Cardiac septum (tissue), 1 donor: ENCODE measurements at regions of chr2 and their contacts with region 1.

Region 1: GRCh38 chr2:37414470-37414949 is 70.1 kb downstream of the QPCT start:
- DNase-seq: no peak

Region 2: DNA sequence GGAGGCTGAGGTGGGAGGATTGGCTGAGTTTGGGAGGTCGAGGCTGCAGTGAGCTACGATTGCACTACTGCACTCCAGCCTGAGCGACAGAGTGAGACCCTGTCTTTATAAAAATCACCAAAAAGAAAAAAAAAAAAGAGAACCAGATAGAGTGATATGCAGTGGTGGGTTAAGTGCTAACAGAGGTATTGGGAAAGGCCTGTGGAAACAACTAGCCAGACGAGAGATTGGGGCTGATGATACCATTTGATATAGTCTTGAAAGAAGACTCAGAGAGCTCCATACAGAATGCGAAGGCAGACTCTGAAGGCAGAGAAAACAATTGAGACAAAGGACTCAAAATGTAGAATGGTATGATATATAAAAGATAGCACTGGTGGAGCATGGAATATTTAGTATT is 122.8 kb after region 1 on chr2:
- intact Hi-C with region 1: loop called (anchors 5 kb)
- DNase-seq: no peak

Region 3: GRCh38 chr2:37635504-37636380 is 221.2 kb after region 1 on chr2:
- intact Hi-C with region 1: loop called (anchors 5 kb)
- DNase-seq: peak; percentile 78

Region 4: DNA sequence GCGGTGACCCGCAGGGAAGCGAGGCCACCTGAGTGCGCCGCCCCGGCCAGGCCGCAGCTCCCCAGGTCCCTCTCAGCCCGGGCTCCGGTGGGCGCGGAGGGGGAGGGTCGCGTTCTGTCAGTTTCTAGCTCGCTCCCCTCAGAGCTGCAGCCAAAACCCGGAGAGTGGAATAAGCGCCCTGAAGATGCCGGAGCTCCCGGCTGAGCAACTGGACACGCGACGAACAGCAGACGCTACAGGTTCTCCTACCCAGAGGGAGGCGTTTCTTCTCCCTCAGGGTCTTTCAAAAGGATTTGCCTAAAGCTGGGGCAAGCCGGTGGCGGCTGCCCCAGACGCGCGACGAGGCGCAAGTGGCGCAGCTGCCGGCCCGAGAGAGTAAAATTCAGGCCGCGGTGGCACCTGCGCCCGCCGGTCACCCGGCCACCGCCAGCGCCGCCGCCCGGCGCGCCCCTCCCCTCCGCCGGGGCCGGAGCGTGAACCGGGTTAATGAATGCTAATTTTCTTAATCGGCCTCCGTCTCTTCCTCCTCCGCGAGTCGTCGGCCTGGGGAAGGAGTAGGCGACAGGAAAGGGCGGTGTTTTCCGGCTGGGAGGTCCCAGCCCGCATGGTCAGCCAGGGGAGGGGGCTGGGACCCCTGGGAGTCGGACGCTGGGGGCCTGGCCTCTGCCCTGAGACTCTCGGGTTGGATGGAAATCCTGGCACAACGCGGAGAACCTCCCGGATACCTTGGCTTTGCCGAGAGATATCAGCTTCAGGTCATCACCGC is 257.8 kb after region 1 on chr2:
- intact Hi-C with region 1: loop called (anchors 1 kb)
- DNase-seq: peak; percentile 90

Region 5: DNA sequence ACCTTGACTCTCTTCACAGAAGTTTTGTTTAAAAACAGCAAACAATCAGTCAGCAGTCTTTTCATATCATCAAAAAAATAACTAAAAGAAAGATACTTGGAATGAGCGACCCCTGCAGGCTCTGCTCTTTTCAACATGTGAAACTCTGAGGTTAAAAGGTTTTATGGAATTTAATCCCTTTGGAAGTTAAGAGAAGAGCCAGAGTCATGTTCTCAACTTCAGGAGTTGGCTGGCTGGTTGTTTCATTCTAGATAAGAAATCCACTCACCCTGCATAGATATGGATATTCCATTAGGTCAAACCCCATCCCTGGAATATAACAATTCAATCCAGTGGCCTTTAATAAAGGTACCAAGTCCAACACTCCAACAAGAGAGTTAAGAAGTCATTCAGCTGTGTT is 395.0 kb after region 1 on chr2:
- intact Hi-C with region 1: loop called (anchors 10 kb)
- DNase-seq: no peak

Region 6: DNA sequence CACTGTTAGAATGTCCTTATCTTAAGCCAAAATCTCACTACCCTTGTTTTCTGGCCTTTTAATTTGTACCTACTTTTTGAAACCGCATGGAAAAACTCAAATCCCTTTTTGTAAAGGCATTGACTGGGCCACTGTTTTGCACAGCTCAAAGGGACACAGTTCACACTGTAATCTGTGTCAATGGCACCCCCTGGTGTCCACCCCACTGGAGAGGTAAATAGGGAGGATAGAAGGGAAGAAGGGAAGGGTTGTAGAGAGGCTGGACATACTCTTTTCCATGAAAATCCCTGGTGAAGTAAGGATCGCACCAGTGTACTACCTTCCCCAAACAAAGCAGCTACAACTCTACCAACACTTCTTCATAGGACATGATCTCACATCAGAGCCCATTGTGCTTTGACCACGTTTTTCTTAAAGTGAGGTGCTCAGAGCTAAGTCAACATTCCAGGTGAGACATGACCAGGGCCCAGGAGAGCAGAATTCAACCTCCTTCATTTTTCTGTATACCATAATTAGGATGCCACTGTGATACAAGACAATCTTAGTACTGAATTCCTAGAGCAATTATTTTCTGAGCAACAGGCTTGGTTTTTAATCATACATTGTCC is 418.2 kb after region 1 on chr2:
- intact Hi-C with region 1: loop called (anchors 1 kb)
- DNase-seq: peak; percentile 91

Region 7: DNA sequence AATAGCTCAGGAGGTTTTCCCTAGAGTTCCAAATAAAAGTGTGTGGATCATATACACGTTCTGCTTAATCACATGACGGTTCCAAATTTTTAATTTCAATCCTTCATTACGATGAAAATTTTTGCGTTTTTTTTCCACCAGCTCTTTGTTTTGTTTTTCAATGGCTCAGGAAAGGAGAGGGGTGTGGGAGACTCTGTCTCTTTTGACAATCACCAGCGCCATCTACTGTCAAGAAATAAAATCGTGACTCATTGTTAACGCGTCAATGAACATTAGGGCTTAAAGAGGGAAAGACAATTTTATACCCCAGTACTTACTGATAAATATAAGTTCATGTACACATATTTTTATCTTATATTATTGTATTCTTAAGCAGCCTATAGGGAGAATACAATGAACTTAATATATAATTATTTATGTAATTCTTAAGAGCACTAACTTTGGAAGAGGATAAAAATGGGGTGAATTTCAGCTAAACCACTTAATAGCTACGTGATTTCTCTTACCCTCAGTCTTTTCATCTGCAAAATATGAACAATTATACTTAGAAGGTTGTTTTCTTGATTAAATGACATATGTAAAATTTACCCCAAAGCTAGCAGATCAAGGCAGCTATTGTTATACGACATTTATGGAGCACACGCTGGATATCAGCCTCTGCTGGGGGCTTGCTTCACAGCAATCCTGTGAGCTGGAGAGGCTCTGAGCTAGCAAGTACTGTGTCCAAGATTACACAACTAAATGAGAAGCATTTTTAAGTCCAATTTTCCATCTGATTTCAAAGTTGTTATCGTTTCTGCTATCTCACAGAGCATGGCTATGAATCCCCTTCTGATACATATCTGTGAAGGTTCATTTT is 463.2 kb after region 1 on chr2:
- intact Hi-C with region 1: loop called (anchors 2 kb)
- DNase-seq: no peak